Posterior vena cava (tissue), 2 donors: ENCODE measurements at regions of chr19 and their contacts with region 1.

Region 1: DNA sequence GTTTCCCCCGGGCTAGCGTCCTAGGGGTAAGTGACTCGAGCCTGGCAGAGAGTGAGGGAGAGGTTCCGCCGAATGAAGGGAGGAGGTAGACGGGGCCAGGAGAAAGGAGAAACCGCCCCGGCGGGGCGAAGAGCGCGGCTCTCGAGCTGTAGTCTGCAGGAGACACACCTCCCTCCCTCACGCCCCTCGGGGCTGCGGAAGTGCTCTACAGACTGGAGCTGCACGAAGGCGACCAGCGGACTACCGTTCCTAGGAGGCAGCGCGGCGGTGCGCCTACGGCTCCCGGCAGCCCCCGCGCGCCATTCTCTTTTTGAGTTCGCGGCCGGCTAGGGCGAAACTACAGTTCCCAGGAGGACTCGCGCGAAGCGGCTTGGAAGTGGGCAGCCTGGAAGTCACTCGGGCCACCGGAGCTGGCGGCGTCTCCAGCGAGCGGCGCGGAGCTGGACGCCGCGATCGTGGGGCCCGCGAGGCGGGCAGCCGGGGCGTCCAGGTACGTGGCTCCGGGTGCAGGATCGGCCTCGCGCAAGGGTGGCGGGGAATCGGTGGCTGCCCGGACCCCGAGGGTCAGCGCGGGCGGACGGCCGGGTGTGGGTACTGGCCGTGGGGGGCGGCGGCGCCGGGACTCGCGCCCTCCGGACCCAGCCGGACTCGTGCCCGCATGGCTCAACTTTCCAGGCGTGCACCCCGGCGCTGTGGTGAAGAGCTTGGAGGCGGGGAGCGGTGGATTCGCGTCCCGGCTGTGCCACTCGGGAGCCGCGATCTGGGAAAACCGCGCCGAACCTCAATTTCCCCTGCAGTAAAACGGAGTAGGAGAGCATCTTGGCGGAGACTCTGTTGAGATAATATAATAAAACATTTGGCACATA is at the start of gene SIPA1L3:
- DNase-seq: peak; percentile 98
- total RNA-seq, gene SIPA1L3: 13.2 to 13.9 TPM

Region 2: GRCh38 chr19:38004521-38005223 is 97.6 kb after region 1 on chr19:
- intact Hi-C with region 1: loop called in 1 of 2 experiments (anchors 5 kb)
- DNase-seq: peak; percentile 94

Region 3: GRCh38 chr19:38095411-38096308 is 188.6 kb after region 1 on chr19:
- intact Hi-C with region 1: loop called (anchors 5 to 10 kb)
- DNase-seq: peak; percentile 91